Naive thymus-derived CD8-positive, alpha-beta T cell (primary cell): ENCODE measurements at regions of chr9 and their contacts with region 1.

Region 1: GRCh38 chr9:133356391-133357091 is at the starts of genes SURF1 and SURF2:
- DNase-seq: peak; percentile 78 to 93 (median 86)
- ATAC-seq: peak; percentile 92 to 94
- H3K4me3 Mint-ChIP-seq: peak within 1 kb of the TSS; percentile 82 to 93 (median 86)
- H3K27ac Mint-ChIP-seq: peak within 1 kb of the TSS; percentile 67 to 95 (median 90)
- H3K4me1 Mint-ChIP-seq: peaks cover 20 to 48% (median 32%) of the 10 kb centered on the region in 4 donors
- H3K27me3 Mint-ChIP-seq: no peaks in the 10 kb centered on the region
- polyA plus RNA-seq, gene SURF1: 90.6 to 119 (median 112) TPM
- polyA plus RNA-seq, gene SURF2: 39.8 to 52.0 (median 49.9) TPM

Region 2: DNA sequence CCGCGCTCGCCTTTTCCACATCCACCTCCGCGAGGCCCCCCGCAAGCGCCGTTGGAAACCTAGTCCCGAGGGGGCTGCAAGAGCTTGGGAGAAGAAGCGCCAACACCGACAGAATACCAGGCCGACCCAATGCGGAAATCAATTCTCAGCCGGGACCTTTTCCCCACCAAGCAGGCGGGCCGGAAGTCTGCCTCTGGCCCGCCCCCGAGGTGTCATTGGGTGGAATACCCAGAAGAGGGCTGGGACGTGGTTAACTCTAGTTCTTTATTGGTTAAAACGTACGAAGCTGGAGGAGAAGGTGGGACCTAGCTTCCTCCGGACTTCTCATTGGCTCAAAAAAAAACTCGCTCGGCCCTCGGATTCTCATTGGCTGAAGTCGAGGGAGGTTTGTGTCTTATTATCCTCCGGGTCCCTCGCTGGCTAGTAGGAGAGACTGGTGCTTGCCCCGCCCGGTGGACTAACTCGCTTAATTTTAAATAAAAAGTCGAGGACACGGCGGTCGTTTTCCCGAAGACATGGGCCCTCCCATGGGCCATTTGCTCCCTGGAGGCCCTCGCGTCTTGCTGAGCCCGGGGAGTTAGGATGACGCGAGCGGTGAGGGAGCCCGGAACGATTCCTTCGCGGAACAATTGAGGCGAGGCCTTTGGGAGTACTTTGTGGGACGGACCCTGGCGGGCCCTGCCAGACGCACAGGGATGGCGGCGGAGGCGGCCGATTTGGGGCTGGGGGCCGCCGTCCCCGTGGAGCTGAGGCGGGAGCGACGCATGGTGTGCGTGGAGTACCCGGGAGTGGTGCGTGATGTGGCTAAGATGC is 326.0 kb before region 1 on chr9 and contains the start of gene GTF3C5:
- POLR2A ChIA-PET with region 1: interaction called, 15 read pairs
- DNase-seq: peak; percentile 81 to 97 (median 92)
- ATAC-seq: peak; percentile 96
- H3K4me3 Mint-ChIP-seq: peak within 1 kb of the TSS; percentile 97 to 100 (median 99)
- H3K27ac Mint-ChIP-seq: peak within 1 kb of the TSS; percentile 97 to 99 (median 98)
- H3K4me1 Mint-ChIP-seq: peaks cover 22 to 75% (median 63%) of the 10 kb centered on the region in 4 donors
- H3K27me3 Mint-ChIP-seq: no peaks in the 10 kb centered on the region
- polyA plus RNA-seq, gene GTF3C5: 33.7 to 40.1 (median 37.8) TPM

Region 3: GRCh38 chr9:133335878-133336811 is 20.4 kb before region 1 on chr9 and contains the start of gene SURF6:
- POLR2A ChIA-PET with region 1: interaction called, 21 read pairs
- DNase-seq: peak; percentile 88 to 94 (median 92)
- ATAC-seq: peak; percentile 93 to 95
- H3K4me3 Mint-ChIP-seq: peak within 1 kb of the TSS; percentile 90 to 98 (median 96)
- H3K27ac Mint-ChIP-seq: peak within 1 kb of the TSS; percentile 89 to 98 (median 96)
- H3K4me1 Mint-ChIP-seq: peaks cover 22 to 65% (median 60%) of the 10 kb centered on the region in 4 donors
- H3K27me3 Mint-ChIP-seq: no peaks in the 10 kb centered on the region
- polyA plus RNA-seq, gene SURF6: 4.9 to 16.9 (median 10.1) TPM

Region 4: DNA sequence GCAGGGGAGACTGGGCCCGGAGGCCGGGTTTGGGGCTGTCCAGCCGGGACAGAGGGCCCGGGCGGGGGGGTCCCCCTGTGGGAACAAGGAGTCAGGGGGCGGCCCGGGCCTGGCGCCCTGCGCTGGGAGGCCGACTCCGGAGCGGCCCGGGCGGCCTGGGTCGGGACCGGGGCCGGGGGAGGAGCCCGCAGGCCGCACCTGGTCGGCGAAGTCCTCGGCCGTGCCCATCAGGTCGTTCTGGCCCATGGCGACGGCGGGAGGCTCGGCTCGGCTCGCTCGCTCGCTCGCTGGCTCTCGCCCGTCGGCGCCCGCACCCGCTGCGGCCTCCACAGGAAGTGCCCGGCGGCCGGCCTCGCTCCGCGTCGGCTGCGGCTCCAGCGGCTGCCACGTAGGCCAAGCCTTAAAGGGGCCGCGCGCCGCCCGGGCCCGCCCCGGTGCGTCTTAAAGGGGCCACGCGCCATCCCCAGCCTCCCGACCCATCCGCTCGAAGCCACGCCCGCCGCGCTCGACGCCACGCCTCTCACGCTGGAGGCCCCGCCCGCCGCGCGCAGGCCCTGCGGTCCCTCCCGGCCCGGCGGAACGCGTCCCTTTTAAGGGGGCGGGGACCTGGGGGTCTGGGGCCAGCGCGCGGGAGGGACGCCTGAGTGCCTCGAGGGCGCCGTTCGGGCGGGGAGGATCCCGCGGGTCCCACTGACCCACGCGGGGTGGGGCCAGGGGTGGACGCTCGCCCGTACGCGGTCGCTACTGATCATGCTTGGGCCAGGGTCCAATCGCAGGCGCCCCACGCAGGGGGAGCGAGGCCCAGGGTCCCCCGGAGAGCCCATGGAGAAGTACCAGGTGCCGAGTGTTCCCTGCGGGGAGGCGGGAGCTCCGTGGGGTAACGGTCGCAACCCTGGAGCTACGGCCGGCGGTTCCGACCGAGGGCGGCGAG is 19.4 kb after region 1 on chr9 and contains the starts of genes STKLD1 and SURF4:
- POLR2A ChIA-PET with region 1: interaction called, 143 read pairs
- DNase-seq: peak; percentile 86 to 94 (median 92)
- ATAC-seq: peak; percentile 83
- H3K4me3 Mint-ChIP-seq: peak within 1 kb of the TSS; percentile 87 to 98 (median 94)
- H3K27ac Mint-ChIP-seq: peak within 1 kb of the TSS; percentile 89 to 97 (median 94)
- H3K4me1 Mint-ChIP-seq: peaks cover 20 to 42% (median 40%) of the 10 kb centered on the region in 4 donors
- H3K27me3 Mint-ChIP-seq: no peaks in the 10 kb centered on the region
- polyA plus RNA-seq, gene STKLD1: 0.35 to 2.3 TPM in 2 of 3 donors, not detected in the other
- polyA plus RNA-seq, gene SURF4: 107 to 146 (median 122) TPM

Region 5: DNA sequence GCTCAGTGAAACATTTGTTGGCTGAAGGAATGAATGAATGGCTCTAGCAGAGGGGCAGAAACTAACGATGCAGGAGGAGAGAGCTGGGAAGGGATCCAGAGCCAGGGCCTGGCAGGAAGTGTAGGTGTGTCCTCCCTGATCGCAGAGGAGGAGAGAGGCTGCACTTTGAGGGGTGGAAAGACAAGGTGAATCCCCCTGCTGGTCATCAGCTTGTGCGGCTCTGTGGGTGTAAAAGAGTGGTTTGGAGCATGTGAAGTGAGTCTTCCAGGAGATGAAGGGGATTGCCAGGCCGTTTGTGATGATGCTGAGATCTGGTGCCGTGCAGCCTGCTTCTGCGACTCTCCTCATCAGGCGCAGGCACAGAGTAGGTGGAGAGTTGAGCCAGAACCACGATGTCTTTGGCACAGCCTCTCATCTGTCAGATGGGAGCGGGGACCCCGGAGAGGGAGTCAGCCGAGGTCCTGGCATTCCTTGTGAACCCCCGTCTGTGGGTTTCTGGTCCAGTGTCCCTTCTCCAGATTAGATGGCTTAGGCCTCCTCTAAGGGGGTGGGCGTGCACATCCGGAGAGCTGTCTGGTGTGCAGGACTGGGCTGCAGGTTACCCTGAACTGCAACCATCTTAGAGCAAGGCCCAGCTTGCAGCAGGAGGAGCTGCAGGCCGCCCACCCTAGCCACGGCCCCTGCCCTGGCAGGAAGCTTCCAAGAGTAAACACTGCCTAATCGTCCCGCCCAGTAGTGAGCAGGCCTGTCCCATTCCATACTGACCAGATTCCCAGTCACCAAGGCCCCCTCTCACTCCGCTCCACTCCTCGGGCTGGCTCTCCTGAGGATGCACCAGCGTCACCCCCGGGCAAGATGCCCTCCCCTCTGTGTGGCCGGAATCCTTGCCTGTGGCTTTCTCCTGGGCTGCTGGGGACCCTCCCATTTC is 65.3 kb after region 1 on chr9 and contains the start of gene ADAMTS13:
- POLR2A ChIA-PET with region 1: no interaction called
- DNase-seq: no peak
- ATAC-seq: no peak
- H3K4me3 Mint-ChIP-seq: peak within 1 kb of the TSS in 2 of 10 donors; percentile 8 to 63
- H3K27ac Mint-ChIP-seq: peak within 1 kb of the TSS in 8 of 10 donors; percentile 26 to 81 (median 61)
- H3K4me1 Mint-ChIP-seq: peaks cover 15 to 33% (median 26%) of the 10 kb centered on the region in 4 donors
- H3K27me3 Mint-ChIP-seq: peaks cover 2 to 27% (median 4%) of the 10 kb centered on the region in 5 donors
- polyA plus RNA-seq, gene ADAMTS13: 0.10 to 0.99 (median 0.41) TPM

Region 6: GRCh38 chr9:133492061-133493021 is 135.8 kb after region 1 on chr9:
- POLR2A ChIA-PET with region 1: no interaction called
- DNase-seq: peak in 1 of 10 donors; percentile 51
- ATAC-seq: no peak
- H3K4me3 Mint-ChIP-seq: no peak overlapping the region
- H3K27ac Mint-ChIP-seq: no peak overlapping the region
- H3K4me1 Mint-ChIP-seq: no peaks in the 10 kb centered on the region
- H3K27me3 Mint-ChIP-seq: peaks cover 0 to 2% (median 0%) of the 10 kb centered on the region in 5 donors